Colonic mucosa (tissue), 4 donors: ENCODE measurements at regions of chr6 and their contacts with region 1.

Region 1: DNA sequence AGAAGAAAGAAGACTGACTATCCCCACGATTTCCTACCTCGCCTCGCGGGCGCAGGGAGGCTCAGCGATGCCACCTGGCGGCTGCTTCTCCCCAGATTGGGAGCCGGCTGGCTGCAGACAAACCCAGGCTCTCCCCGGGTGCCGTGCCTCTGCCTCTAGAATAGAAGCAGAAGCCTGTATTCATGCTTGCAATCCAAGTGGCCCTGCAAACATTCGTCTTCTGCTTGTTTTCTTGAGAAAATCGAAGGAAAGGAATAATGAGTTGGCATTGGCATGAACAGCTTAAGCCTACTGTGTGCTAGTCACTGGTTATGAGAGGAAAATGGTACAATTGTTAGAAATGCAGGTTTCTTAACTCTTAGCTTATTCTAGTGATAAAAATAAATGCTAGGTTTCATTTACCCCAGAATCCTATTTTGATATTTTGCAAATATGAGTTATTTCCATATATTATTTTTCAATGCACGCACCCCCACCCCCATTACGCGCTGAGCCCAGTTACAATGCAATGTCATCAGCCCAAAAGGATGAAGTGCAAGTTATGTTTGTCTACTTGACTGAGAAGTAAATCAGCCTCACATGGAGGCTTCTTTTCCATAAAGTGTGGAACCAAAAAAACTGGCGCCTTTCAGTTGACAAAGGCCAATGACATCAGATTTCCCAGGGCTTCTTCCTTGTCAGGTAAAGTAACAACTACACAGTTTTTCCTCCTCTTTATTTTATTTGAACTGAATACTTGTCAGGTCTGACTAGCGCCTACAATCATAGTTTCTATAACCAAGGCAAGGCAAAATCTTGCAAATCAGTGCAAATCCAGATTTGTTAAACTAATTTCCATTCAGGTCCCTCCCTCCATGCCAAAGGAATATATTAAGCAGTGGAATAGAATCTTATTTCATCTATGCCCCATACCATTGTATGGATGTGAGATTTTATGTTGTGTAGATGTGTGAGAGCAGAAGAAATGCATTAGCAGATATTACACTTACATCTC is 3.9 kb upstream of the SOX4 start:
- DNase-seq: peak; percentile 94
- H3K4me3 ChIP-seq: peak overlapping the region; percentile 71
- H3K27ac ChIP-seq: peak overlapping the region; percentile 92
- H3K4me1 ChIP-seq: no peaks in the 10 kb centered on the region
- H3K27me3 ChIP-seq: no peaks in the 10 kb centered on the region
- CTCF ChIP-seq: peak; percentile 91

Region 2: GRCh38 chr6:20564269-20564668 is 1025.4 kb before region 1 on chr6:
- intact Hi-C with region 1: loop called (anchors 2 kb)
- DNase-seq: no peak
- H3K4me3 ChIP-seq: no peak overlapping the region
- H3K27ac ChIP-seq: no peak overlapping the region
- H3K4me1 ChIP-seq: no peaks in the 10 kb centered on the region
- H3K27me3 ChIP-seq: no peaks in the 10 kb centered on the region
- CTCF ChIP-seq: peak; percentile 60

Region 3: DNA sequence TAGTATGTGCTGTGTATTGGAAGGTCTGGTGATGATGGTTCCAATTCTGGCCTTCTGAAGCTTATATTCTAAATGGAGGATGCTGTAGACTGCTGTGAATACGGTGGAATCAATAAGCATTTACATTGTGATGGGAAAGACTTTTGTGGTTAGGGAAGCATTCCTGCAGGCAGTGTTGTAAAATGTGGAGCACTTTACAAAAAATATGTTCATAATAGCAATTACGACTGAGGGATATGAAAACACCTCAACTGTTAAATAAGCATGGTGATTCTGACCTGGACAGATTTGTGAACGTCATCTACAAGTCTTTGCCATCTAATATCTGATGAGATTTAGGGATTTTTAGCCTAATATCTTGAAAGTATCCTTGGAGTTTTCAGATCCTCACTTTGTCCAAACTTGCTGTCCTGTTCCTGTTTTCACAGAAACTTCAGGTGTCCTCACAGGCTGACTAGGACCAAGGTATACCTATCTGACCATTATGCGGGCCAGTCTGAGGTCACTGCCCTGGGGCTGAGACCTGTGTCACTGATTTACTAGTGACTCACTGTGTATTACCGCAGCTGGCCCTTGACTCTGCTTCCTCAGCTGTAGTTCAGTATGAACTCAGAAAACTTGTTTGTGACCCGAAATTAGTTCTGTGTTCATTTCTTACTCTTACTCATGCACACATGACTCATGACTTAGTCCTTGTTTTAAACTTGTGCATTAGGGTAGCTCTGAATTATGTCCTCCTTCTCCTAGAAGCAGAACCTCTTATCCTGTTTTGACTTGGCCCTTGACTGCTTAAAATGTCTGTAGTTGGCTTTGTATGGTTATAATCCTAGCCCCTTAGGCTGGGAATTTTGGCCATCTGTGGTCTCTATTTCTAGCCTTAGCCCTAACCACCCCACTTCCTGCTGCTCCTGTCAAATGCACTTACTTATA is 712.4 kb before region 1 on chr6:
- intact Hi-C with region 1: loop called (anchors 10 kb)
- DNase-seq: peak; percentile 32
- H3K4me3 ChIP-seq: no peak overlapping the region
- H3K27ac ChIP-seq: peak overlapping the region; percentile 48
- H3K4me1 ChIP-seq: no peaks in the 10 kb centered on the region
- H3K27me3 ChIP-seq: no peaks in the 10 kb centered on the region
- CTCF ChIP-seq: no peak

Region 4: GRCh38 chr6:21748343-21749056 is 158.9 kb after region 1 on chr6:
- intact Hi-C with region 1: no loop called
- DNase-seq: no peak
- H3K4me3 ChIP-seq: no peak overlapping the region
- H3K27ac ChIP-seq: no peak overlapping the region
- H3K4me1 ChIP-seq: no peaks in the 10 kb centered on the region
- H3K27me3 ChIP-seq: no peaks in the 10 kb centered on the region
- CTCF ChIP-seq: no peak